CD14-positive monocyte (primary cell): ENCODE measurements at regions of chr10 and their contacts with region 1.

Region 1: DNA sequence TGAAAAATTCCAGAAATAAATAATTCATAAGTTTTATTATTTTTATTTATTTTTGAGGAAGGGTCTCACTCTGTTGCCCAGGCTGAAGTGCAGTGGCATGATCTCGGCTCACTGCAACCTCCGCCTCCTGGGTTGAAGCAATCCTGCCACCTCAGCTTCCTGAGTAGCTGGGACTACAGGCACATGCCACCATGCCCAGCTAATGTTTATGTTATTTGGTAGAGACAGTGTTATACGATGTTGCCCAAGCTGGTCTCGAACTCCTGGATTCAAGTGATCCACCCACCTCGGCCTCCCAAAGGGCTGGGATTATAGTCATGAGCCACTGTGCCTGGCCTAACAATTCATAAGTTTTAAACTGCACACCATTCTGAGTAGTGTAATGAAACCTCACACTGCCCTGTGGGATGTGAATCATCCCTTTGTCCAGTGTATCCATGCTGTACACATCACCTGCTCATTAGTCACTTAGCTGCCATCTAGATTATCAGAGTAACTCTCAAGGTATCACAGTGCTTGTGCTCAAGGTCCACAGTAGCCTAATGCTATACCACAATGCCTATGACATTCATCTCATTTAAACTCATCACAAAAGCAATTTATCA is 17.9 kb downstream of the RTKN2 start:
- DNase-seq: peak in 2 of 3 donors; percentile 20 to 65
- H3K4me3 ChIP-seq: no peak overlapping the region
- H3K4me3 Mint-ChIP-seq: peak overlapping the region in 1 of 2 donors; percentile 24
- H3K27ac ChIP-seq: no peak overlapping the region
- H3K27ac Mint-ChIP-seq: peak overlapping the region in 1 of 7 donors; percentile 31
- H3K4me1 ChIP-seq: peaks cover 0 to 9% of the 10 kb centered on the region in 2 donors
- H3K4me1 Mint-ChIP-seq: peaks cover 12% of the 10 kb centered on the region
- H3K27me3 ChIP-seq: no peaks in the 10 kb centered on the region
- H3K27me3 Mint-ChIP-seq: peaks cover 0 to 2% (median 0%) of the 10 kb centered on the region in 3 donors
- CTCF ChIP-seq: no peak

Region 2: DNA sequence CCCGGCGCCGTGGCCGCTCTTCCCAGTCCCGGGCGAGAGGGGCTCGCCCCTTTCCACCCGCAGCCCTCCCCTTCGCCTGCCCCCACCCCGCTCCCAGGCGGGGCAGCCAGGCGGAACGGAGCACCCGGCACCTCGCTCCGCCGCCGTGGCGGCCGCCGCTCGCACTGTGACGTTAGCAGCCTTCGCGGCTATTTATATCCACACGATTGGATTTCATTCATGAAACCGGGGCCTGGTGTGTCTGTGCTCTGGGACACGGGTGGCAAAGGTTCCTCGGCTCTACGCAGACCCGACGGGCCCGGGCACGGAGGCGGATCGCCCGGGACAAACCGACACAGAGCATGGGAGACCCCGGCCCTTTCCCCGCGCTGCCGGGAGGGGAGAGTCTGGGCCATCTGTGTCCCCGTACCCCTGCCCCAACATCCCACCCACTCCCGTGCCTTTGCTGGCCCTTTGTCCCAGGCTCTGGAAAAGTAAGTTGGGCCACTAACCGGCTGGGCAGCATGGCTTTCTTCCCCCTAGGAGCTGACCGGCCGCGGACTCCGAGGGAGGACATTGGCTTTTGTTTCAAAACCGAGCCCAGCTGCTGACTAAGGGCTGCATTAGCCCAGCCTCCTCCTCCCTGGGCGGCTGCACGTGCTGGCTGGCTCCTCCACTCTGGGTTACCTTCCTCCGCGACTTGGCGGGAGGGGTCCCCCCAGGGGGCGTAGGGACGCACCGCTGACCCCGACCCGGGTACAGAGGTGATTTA is 1306.4 kb before region 1 on chr10 and contains the start of gene RHOBTB1:
- intact Hi-C with region 1: no loop called
- DNase-seq: peak; percentile 32 to 49 (median 48)
- H3K4me3 ChIP-seq: peak within 1 kb of the TSS; percentile 61 to 81 (median 74)
- H3K4me3 Mint-ChIP-seq: peak within 1 kb of the TSS; percentile 90 to 94
- H3K27ac ChIP-seq: peak within 1 kb of the TSS; percentile 36 to 69
- H3K27ac Mint-ChIP-seq: peak within 1 kb of the TSS; percentile 68 to 87 (median 84)
- H3K4me1 ChIP-seq: peaks cover 16 to 21% of the 10 kb centered on the region in 2 donors
- H3K4me1 Mint-ChIP-seq: peaks cover 14% of the 10 kb centered on the region
- H3K27me3 ChIP-seq: peaks cover 0 to 5% of the 10 kb centered on the region in 2 donors
- H3K27me3 Mint-ChIP-seq: peaks cover 4 to 10% (median 8%) of the 10 kb centered on the region in 3 donors
- CTCF ChIP-seq: no peak
- polyA plus RNA-seq, gene RHOBTB1: 0.41 to 0.96 (median 0.62) TPM

Region 3: DNA sequence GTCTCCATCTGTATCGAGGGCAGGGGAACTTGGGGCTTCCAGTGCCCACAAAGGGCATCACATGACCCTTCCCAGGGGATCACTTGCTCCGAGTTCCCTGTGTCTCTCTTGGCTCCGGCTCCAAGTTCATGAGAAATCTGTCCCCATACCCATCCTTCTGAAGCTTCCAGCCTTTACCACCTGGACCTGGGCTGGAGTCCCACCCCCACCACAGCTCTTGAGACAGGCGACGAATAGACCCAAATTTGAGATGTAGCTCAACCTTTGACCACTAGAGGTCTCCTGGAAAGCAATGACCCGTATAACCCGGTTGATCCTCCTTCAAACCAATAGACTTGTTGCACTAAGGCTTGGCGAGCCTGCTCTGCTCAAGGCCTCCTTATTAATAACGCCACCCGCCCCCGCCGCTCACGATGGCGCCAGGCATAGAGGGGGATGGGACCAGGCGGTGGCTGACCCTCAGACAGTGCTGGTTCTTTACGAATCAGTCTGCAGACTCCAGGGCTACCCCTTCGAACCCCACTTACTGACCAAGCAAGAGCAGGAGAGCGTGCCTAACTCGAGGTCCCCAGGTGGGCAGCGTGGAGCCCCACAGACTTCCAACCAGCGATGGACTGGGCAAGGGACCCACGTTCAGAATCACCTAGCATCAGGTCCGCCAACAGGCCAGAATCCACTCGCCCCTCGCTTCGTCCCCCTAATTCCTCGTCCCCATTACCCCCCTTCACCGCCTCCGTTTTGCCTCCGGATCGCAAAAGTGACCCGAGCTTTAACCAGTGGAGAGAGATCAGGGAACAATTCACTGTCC is 353.6 kb before region 1 on chr10:
- intact Hi-C with region 1: loop called in 1 of 2 experiments (anchors 10 kb)
- DNase-seq: peak; percentile 73 to 84 (median 83)
- H3K4me3 ChIP-seq: peak overlapping the region; percentile 31 to 79 (median 46)
- H3K4me3 Mint-ChIP-seq: peak overlapping the region; percentile 79 to 90
- H3K27ac ChIP-seq: peak overlapping the region; percentile 51 to 78
- H3K27ac Mint-ChIP-seq: peak overlapping the region; percentile 78 to 93 (median 91)
- H3K4me1 ChIP-seq: peaks cover 34 to 38% of the 10 kb centered on the region in 2 donors
- H3K4me1 Mint-ChIP-seq: peaks cover 32% of the 10 kb centered on the region
- H3K27me3 ChIP-seq: no peaks in the 10 kb centered on the region
- H3K27me3 Mint-ChIP-seq: peaks cover 0 to 2% (median 0%) of the 10 kb centered on the region in 3 donors
- CTCF ChIP-seq: peak; percentile 78

Region 4: DNA sequence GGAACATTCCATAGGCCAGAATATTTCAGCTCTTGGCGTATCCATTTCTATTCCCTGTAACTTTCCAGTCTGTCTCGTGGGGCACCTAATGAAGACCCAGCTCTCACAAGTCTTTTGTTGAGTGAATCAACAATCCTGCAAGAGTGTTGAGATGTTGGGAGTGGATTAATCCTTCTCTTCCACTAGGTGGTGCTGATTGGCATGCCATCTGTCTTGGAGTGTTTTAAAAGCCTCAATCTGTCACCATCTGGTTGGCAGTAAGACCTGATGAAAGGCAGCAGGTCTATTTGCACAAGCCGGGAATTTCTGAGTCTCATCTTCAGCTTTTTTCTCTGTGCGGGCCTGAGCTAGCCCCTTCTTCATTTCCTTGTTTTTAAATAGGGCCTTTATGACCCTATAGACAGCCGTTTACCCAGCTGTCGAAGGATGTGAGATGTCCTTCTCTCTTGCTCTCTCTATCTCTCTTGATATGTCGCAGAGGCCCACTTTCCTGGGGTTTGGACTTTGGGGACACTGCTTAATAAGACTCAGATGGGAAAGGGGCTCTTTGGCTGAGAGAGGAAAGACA is 304.0 kb after region 1 on chr10:
- intact Hi-C with region 1: no loop called
- DNase-seq: peak; percentile 30 to 56 (median 54)
- H3K4me3 ChIP-seq: no peak overlapping the region
- H3K4me3 Mint-ChIP-seq: no peak overlapping the region
- H3K27ac ChIP-seq: no peak overlapping the region
- H3K27ac Mint-ChIP-seq: peak overlapping the region in 2 of 7 donors; percentile 16 to 72
- H3K4me1 ChIP-seq: no peaks in the 10 kb centered on the region
- H3K4me1 Mint-ChIP-seq: no peaks in the 10 kb centered on the region
- H3K27me3 ChIP-seq: no peaks in the 10 kb centered on the region
- H3K27me3 Mint-ChIP-seq: peaks cover 3 to 18% (median 10%) of the 10 kb centered on the region in 3 donors
- CTCF ChIP-seq: peak; percentile 78